Body of pancreas (tissue), 4 donors: ENCODE measurements at regions of chr17 and their contacts with region 1.

Region 1: DNA sequence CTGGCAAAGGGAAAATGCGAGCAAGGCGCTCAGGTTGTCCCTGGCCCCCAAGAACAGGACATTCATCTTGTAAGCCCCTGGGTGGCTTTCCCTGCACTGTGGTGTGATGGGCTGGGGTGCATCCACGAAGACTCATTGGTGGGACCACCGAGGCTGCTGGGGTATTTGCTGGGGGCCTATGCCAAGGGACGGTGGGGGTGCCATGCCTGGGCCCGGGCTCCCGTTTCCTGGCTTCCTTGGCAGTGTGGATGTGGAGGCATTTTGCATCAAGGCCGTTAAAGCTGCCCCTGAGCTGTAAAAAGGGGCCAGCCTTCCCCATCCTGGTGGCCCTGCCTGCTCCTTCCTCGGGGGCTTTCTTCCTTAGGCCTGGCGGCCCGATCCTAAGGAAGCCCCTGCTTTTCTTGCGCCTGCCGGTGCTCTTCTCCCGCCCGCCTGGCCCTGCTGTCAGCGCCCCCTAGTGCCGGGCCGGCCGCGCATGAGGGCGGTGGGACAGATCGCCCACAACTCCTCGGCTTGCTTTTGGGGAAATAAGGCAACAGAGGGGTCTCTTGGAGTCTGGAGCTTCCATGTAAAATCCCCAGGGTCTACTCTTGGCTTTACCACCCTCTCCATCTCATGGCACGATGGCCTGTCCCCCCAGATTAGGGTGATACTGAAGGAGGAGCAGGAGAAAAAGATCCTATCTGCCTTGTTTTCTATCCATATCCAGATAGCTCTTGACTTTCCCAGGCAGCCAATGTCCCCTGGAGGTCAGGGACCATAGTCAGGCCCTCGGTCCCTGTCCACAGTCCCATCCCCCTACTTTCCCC is 9.8 kb upstream of the TBX2 start:
- DNase-seq: peak in 2 of 4 donors; percentile 41 to 52
- ATAC-seq: peak; percentile 56
- H3K4me3 ChIP-seq: no peak overlapping the region
- H3K27ac ChIP-seq: no peak overlapping the region
- H3K4me1 ChIP-seq: peaks cover 5% of the 10 kb centered on the region
- H3K27me3 ChIP-seq: no peaks in the 10 kb centered on the region
- CTCF ChIP-seq: peak; percentile 57 to 79 (median 69)
- POLR2A ChIP-seq: no peak

Region 2: GRCh38 chr17:60720763-60721531 is 668.9 kb before region 1 on chr17:
- intact Hi-C with region 1: loop called (anchors 10 kb)
- DNase-seq: peak; percentile 40 to 57 (median 41)
- ATAC-seq: peak; percentile 58
- H3K4me3 ChIP-seq: no peak overlapping the region
- H3K27ac ChIP-seq: no peak overlapping the region
- H3K4me1 ChIP-seq: no peaks in the 10 kb centered on the region
- H3K27me3 ChIP-seq: no peaks in the 10 kb centered on the region
- CTCF ChIP-seq: peak; percentile 73 to 83 (median 79)
- POLR2A ChIP-seq: no peak